Activated CD4-positive, alpha-beta T cell treated with anti-CD3 and anti-CD28 coated beads, Interleukin-2, amount 10 ng/mL, durations not matched to agents 7 days and 5 days (primary cell): ENCODE measurements at regions of chr19 and their contacts with region 1.

Region 1: GRCh38 chr19:34461375-34462100 is 20.0 kb upstream of the WTIP start:
- DNase-seq: no peak
- H3K4me3 Mint-ChIP-seq: no peak overlapping the region
- H3K27ac Mint-ChIP-seq: no peak overlapping the region
- H3K4me1 Mint-ChIP-seq: no peaks in the 10 kb centered on the region
- H3K27me3 Mint-ChIP-seq: no peaks in the 10 kb centered on the region

Region 2: GRCh38 chr19:34375598-34375997 is 85.9 kb before region 1 on chr19:
- CTCF ChIA-PET with region 1: no interaction called
- POLR2A ChIA-PET with region 1: no interaction called
- DNase-seq: no peak
- H3K4me3 Mint-ChIP-seq: no peak overlapping the region
- H3K27ac Mint-ChIP-seq: no peak overlapping the region
- H3K4me1 Mint-ChIP-seq: peaks cover 16% of the 10 kb centered on the region
- H3K27me3 Mint-ChIP-seq: no peaks in the 10 kb centered on the region

Region 3: DNA sequence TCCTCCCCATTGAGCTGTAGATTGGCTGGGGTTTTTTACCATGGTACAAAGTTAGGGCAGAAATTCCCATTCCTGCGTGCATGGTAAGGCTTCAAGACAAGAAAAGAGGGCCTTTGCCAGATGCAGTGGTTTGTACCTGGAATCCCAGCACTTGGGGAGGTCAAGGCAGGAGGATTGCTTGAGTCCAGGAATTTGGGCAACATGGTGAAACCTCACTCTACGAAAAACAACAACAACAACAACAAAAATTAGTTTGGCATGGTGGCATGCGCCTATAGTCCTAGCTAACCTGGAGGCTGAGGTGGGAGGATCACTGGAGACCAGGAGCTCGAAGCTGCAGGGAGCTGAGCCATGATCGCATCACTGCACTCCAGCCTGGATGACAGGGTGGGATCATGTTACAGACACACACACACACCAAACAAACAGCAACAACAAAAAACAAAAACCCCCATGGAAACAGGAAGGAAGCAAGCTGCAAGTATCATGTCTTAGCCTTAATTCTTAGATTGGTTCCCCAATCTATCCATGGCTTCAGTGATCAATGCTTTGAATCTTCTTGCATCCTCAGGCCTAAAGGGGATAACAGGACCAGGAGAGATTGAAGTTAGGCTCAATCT is 14.5 kb after region 1 on chr19:
- CTCF ChIA-PET with region 1: interaction called, 10 read pairs
- POLR2A ChIA-PET with region 1: no interaction called
- DNase-seq: no peak
- H3K4me3 Mint-ChIP-seq: no peak overlapping the region
- H3K27ac Mint-ChIP-seq: no peak overlapping the region
- H3K4me1 Mint-ChIP-seq: peaks cover 6% of the 10 kb centered on the region
- H3K27me3 Mint-ChIP-seq: peaks cover 25% of the 10 kb centered on the region